Testis (tissue), 5 donors: ENCODE measurements at regions of chr2 and their contacts with region 1.

Region 1: GRCh38 chr2:216687646-216688045 is 7.7 kb downstream of the IGFBP5 start:
- DNase-seq: no peak
- H3K4me3 ChIP-seq: no peak overlapping the region
- H3K27ac ChIP-seq: no peak overlapping the region
- H3K4me1 ChIP-seq: peaks cover 3% of the 10 kb centered on the region
- H3K27me3 ChIP-seq: no peaks in the 10 kb centered on the region
- CTCF ChIP-seq: peak in 1 of 3 experiments; percentile 18
- POLR2A ChIP-seq: no peak

Region 2: GRCh38 chr2:216114714-216115557 is 572.7 kb before region 1 on chr2:
- intact Hi-C with region 1: no loop called
- DNase-seq: peak; percentile 99
- H3K4me3 ChIP-seq: peak overlapping the region; percentile 58 to 71
- H3K27ac ChIP-seq: peak overlapping the region; percentile 82 to 87
- H3K4me1 ChIP-seq: peaks cover 24% of the 10 kb centered on the region
- H3K27me3 ChIP-seq: no peaks in the 10 kb centered on the region
- CTCF ChIP-seq: peak; percentile 89 to 99 (median 98)
- POLR2A ChIP-seq: no peak

Region 3: DNA sequence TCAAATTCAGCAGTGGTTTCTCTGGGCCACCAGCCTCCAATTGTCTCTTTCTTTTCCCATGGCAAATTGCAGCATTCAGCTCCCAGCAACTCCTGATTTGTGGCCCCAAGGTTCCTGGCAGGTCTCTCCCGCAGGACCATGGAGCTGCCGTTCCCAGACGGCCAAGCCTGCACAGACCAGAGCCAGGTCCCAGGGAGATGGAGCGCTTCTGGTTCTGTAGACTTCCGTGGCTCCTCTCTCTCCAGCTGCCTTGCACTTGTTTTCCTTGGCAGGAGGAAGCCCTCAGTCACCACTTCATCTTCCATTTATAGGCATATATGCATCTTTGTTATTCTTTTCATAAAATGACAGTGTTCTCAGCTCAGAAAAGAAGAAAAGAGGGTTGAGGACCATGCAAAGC is 150.5 kb after region 1 on chr2:
- intact Hi-C with region 1: no loop called
- DNase-seq: no peak
- H3K4me3 ChIP-seq: no peak overlapping the region
- H3K27ac ChIP-seq: no peak overlapping the region
- H3K4me1 ChIP-seq: peaks cover 9% of the 10 kb centered on the region
- H3K27me3 ChIP-seq: no peaks in the 10 kb centered on the region
- CTCF ChIP-seq: no peak
- POLR2A ChIP-seq: no peak

Region 4: DNA sequence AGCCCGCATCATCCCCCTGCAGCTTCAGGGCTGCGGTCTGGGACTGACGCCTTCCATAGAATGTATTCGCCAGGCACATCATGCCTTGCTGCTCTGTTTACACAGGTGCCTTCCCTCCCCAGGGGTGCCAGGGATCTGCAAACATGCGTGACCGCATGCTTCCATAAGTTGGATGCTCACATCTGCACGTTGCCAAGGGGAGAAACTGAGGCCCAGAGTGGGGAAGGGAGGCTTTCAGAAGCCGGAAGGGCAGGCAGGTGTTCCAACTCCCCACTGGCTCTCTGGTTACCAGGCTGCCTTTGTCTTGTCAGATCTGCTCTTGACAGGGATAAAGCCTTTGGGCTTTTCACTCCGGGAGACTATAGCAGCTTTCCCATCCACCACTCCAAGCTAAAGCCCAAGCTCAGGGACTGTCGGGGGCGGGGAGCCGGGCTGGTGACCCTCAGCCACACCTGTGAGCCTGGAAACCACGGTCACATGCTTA is 298.1 kb after region 1 on chr2:
- intact Hi-C with region 1: no loop called
- DNase-seq: no peak
- H3K4me3 ChIP-seq: no peak overlapping the region
- H3K27ac ChIP-seq: no peak overlapping the region
- H3K4me1 ChIP-seq: no peaks in the 10 kb centered on the region
- H3K27me3 ChIP-seq: no peaks in the 10 kb centered on the region
- CTCF ChIP-seq: no peak
- POLR2A ChIP-seq: no peak

Region 5: DNA sequence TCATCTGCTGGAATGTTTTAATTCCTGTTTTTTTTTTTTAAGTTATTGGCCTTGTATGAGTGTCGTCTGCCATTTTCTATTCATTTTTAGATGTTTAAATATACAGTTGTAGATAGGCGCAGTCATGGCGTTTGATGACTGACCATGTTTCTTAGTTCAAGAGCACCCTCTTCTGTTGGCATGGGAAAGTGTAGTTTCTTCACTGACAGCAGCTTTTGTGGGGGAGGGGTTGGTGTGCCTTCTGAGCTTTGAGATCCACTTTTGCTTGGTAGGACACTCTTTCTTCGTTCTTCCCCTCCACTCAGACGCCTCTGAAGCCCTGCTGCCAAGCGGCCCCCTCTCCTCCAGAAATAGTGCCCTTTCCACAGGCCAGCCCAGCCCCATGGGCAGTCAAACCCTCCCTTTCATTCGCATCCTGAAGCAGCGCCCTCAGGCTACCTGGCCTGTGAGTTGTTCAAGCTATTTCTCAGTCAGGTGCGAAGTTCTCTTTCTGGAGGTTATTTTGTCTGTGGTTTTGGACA is 823.2 kb after region 1 on chr2:
- intact Hi-C with region 1: loop called (anchors 5 kb)
- DNase-seq: peak; percentile 87
- H3K4me3 ChIP-seq: no peak overlapping the region
- H3K27ac ChIP-seq: peak overlapping the region in 1 of 2 donors; percentile 34
- H3K4me1 ChIP-seq: peaks cover 29% of the 10 kb centered on the region
- H3K27me3 ChIP-seq: no peaks in the 10 kb centered on the region
- CTCF ChIP-seq: peak; percentile 56 to 80 (median 63)
- POLR2A ChIP-seq: no peak